ENCODE measurements at regions of chr12 and their contacts with region 1.

Region 1: GRCh38 chr12:58920102-58920960 is at the start of gene LRIG3:
- DNase-seq: peak; percentile 81 to 88
- H3K4me3 ChIP-seq: peak within 1 kb of the TSS; percentile 59
- H3K4me3 Mint-ChIP-seq: peak within 1 kb of the TSS; percentile 91
- H3K27ac Mint-ChIP-seq: peak within 1 kb of the TSS; percentile 82
- H3K4me1 ChIP-seq: peaks cover 36% of the 10 kb centered on the region
- H3K4me1 Mint-ChIP-seq: peaks cover 38% of the 10 kb centered on the region
- H3K27me3 ChIP-seq: no peaks in the 10 kb centered on the region
- H3K27me3 Mint-ChIP-seq: no peaks in the 10 kb centered on the region
- CTCF ChIP-seq: peak in 1 of 2 experiments; percentile 24
- total RNA-seq, gene LRIG3: 19.1 and 19.8 TPM in 2 replicates

Region 2: GRCh38 chr12:58416236-58416635 is 504.1 kb before region 1 on chr12:
- CTCF ChIA-PET with region 1: no interaction called
- POLR2A ChIA-PET with region 1: no interaction called
- intact Hi-C with region 1: loop called (anchors 2 kb)
- DNase-seq: no peak
- H3K4me3 ChIP-seq: no peak overlapping the region
- H3K4me3 Mint-ChIP-seq: no peak overlapping the region
- H3K27ac Mint-ChIP-seq: peak overlapping the region; percentile 64
- H3K4me1 ChIP-seq: peaks cover 49% of the 10 kb centered on the region
- H3K4me1 Mint-ChIP-seq: peaks cover 54% of the 10 kb centered on the region
- H3K27me3 ChIP-seq: no peaks in the 10 kb centered on the region
- H3K27me3 Mint-ChIP-seq: no peaks in the 10 kb centered on the region
- CTCF ChIP-seq: peak in 1 of 2 experiments; percentile 2

Region 3: DNA sequence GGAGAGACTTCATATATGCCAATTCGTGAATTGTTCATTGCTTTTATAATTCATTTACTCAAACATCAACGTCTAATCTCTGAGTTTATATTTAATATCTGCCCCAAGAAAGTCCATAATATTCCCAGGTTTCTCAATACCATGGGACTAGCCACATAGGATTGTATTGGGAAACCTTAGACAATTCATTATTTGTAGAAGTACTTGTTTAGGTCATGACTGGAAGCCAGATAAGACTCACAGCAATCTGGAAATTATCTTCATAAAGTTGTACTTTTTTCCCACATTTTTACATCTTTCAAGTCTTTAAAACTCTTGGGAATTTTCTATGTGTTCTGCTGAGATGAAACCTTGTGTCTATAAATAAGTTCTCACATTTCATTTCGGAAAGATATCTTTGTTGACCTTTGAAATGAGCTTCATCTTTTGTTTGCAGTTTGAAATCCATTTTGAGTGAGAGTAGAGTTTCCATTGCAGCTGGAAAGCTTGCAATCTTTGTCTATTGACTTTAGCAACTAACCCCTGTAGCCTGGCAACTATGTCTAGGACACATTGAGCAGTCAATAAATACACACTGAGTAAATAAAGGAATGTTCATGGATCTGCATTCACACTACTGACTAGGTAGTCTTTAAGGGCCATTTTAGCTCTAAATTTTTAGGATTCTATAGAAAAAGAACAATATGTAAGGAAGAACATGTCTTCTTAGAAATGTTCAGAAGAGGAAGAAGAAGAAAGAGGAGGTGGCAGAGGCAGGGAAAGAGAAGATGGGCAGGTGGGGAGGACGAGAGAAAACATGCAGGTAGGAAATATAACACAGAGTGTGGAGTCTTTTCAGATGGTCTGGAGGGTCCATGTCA is 154.4 kb before region 1 on chr12:
- CTCF ChIA-PET with region 1: no interaction called
- POLR2A ChIA-PET with region 1: no interaction called
- intact Hi-C with region 1: loop called (anchors 2 kb)
- DNase-seq: peak; percentile 38 to 72
- H3K4me3 ChIP-seq: no peak overlapping the region
- H3K4me3 Mint-ChIP-seq: peak overlapping the region; percentile 6
- H3K27ac Mint-ChIP-seq: peak overlapping the region; percentile 91
- H3K4me1 ChIP-seq: peaks cover 19% of the 10 kb centered on the region
- H3K4me1 Mint-ChIP-seq: peaks cover 17% of the 10 kb centered on the region
- H3K27me3 ChIP-seq: no peaks in the 10 kb centered on the region
- H3K27me3 Mint-ChIP-seq: no peaks in the 10 kb centered on the region
- CTCF ChIP-seq: no peak

Region 4: GRCh38 chr12:59149997-59150642 is 229.8 kb after region 1 on chr12:
- CTCF ChIA-PET with region 1: no interaction called
- POLR2A ChIA-PET with region 1: no interaction called
- intact Hi-C with region 1: loop called (anchors 10 kb)
- DNase-seq: peak in 1 of 2 experiments; percentile 67
- H3K4me3 ChIP-seq: no peak overlapping the region
- H3K4me3 Mint-ChIP-seq: no peak overlapping the region
- H3K27ac Mint-ChIP-seq: no peak overlapping the region
- H3K4me1 ChIP-seq: no peaks in the 10 kb centered on the region
- H3K4me1 Mint-ChIP-seq: peaks cover 17% of the 10 kb centered on the region
- H3K27me3 ChIP-seq: no peaks in the 10 kb centered on the region
- H3K27me3 Mint-ChIP-seq: no peaks in the 10 kb centered on the region
- CTCF ChIP-seq: peak; percentile 86 to 95